GM18951 (cell line): ENCODE measurements at regions of chr14 and their contacts with region 1.

Region 1: DNA sequence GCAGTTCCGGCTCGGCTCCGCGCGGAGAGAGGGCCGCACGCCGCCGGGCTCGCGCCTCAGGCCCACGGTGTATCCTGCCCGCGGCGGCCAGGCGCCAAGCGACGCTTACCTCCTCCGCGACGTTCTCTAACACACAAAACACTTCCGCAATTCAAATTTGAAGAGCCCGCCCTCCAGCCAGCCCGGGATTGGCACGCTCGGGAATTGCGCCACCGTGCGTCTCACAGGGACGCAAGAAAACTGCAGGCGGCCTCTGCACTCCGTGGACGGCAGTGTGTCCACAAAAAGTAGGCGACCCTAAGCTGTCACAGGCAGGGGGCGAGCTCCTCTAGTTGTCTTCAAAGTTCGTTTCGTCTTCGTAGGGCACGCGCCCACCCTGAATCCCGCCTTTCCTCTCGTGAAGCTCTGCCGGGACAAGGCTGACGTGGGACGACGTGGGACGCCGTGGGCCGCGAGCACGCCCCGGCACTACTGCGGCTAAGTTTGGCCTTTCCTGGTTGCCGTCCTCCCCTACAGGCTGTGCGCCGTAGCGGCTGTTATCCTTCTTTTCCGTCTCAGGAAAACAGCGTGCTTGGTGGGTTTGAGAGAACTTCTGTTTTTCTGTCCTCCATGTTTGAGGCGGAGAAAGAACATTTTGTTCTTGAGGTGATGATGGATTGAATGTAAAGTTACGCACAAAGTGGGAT is at the start of gene MIS18BP1:
- POLR2A ChIP-seq: peak; percentile 84

Region 2: DNA sequence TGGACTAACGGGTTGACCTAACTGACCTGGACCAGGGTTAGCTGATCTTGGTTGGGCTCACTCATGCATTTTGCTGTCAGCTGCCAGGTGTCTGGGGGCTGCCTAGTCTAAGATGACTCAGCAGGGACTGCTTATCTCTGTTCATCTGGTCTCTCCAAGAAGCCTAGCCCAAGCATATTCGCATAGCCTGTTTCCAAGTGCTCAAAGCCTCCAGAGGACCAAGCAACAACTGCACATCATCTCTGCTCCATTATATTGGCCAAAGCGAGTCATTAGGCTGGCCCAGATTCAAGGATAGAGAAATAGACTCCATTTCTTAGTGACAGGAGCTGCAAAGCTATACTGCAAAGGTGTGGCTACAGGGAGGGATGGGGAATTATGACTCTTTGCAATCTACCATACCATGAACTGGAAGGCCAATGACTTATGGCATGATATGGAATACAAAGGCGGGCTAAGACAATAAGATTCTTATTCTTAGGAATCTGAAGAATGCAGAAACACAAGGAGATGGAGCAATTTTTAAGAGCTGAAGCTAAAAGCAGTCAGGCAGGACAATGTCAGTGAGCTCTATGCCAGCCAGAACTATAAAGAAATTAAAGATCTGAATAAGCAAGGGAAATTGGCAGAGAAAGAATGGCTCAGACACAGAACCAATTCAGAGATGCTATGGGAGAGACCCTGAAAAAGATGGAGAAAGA is 551.5 kb before region 1 on chr14:
- in situ Hi-C with region 1: no loop called
- POLR2A ChIP-seq: no peak

Region 3: DNA sequence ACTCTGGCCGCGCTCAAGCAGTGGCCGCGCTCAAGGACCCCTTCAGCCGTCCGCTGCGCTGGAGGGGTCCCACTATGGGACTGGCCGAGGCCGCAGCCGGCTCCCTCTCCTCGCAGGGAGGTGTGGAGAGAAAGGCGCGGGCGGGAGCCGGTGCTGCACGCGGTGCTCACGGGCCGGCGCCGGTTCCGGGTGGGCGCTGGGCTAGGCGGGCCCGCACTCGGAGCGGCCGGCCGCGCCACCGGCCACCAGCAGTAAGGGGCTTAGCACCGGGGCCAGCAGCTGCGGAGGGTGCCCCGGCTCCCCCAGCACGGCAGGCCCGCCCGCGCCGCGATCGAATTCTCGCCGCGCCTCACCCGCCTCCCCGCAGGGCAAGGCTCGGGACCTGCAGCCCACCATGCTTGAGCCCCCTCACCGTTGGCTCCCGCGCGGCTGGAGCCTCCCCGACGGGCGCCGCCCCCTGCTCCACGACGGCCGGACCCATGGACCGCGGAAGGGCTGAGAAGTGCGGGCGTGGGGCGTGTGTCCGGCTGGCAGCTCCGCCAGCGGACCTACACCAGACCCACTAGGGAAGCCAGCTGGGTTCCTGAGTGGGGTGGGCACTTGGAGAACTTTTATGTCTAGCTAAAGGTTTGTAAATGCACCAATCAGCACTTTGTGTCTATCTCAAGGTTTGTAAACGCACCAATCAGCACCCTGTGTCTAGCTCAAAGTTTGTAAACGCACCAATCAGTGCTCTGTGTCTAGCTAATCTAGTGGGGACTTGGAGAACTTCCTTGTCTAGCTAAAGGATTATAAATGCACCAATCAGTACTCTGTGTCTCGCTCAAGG is 341.0 kb before region 1 on chr14:
- in situ Hi-C with region 1: loop called (anchors 25 kb)
- POLR2A ChIP-seq: no peak